K562 (cell line): ENCODE measurements at regions of chr5 and their contacts with region 1.

Region 1: DNA sequence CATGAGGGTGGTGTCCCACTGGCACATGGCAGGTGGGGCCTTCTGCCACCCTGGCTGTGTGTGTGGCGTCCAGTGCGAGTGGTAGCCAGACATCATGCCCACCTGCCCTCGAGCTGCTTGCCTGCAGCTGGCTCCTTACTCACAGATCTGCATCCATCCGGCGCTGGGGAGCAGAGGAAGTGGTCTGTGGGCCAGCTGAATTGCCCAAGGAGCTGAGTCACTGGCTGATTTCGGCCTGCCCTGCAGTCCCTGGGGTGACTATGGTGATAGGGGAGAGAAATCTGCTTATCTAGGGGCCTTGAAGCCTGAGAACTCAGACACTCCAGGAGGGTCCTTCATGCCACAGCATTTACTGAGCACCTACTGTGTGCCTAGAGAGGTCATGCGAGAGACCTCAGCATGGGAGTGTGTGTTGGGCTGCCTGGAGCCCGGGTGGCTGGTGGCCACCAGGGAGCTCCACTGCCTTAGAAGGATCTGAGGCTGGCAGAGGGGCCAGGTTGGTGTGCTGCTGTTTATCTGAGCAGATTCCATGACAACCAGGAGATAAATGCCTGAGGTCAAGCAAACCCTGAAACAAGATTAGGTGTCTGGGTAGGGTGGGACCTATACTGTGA is 57.1 kb downstream of the SLC22A5 start:
- DNase-seq: peak; percentile 75 to 91 (median 84)
- ATAC-seq: peak; percentile 81
- H3K4me3 ChIP-seq: no peak overlapping the region
- H3K27ac ChIP-seq: peak overlapping the region; percentile 76
- H3K4me1 ChIP-seq: peaks cover 52 to 71% of the 10 kb centered on the region in 2 experiments
- H3K27me3 ChIP-seq: no peaks in the 10 kb centered on the region
- CTCF ChIP-seq: peak; percentile 57 to 66 (median 59)
- EP300 ChIP-seq: peak; percentile 83; the same call in 1 of the 2 replicates
- POLR2A ChIP-seq: peak; percentile 71
- RAD21 ChIP-seq: peak; percentile 60 to 66

Region 2: DNA sequence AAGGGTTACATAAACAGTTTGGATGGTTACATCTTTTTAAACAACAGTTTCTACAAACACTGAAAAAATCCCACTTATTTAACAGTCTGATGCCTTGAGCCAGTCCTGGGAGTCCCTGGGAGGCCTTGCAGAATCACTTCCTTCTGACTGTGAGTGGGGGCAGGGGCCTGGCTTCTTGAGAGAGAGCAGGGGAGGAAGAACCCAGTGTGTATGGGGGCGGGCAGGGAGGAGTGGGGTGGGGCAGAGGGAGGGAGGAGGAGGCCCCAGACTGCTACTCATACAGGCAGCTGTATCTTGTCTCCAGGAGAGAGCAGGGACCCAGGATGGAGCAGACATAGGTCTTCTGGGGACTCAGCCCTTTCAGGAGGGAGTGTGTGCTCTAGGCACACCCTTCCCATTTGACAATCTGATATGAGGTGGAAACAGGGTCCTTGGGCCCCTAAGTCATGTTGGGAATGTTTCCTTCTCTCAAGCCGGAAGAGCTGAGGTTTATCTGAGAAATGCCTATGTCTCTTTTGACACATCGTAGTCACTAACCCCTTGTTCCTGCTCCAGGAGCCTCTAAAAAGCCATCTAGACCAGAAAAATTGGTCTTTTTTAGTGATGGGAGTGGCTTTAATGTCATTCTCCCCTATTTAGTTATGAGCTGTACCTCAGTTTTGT is 11.1 kb after region 1 on chr5:
- CTCF ChIA-PET with region 1: no interaction called
- POLR2A ChIA-PET with region 1: interaction called, 26 read pairs
- in situ Hi-C with region 1: no loop called
- intact Hi-C with region 1: no loop called
- DNase-seq: peak; percentile 82 to 91 (median 88)
- ATAC-seq: peak; percentile 95
- H3K4me3 ChIP-seq: no peak overlapping the region
- H3K27ac ChIP-seq: peak overlapping the region; percentile 5; the same call in 1 of the 3 replicates
- H3K4me1 ChIP-seq: peaks cover 15 to 29% of the 10 kb centered on the region in 2 experiments; a peak in 4 of 5 replicates
- H3K27me3 ChIP-seq: no peaks in the 10 kb centered on the region
- CTCF ChIP-seq: no peak
- EP300 ChIP-seq: peak; percentile 25; the same call in 1 of the 2 replicates
- POLR2A ChIP-seq: no peak
- RAD21 ChIP-seq: no peak

Region 3: DNA sequence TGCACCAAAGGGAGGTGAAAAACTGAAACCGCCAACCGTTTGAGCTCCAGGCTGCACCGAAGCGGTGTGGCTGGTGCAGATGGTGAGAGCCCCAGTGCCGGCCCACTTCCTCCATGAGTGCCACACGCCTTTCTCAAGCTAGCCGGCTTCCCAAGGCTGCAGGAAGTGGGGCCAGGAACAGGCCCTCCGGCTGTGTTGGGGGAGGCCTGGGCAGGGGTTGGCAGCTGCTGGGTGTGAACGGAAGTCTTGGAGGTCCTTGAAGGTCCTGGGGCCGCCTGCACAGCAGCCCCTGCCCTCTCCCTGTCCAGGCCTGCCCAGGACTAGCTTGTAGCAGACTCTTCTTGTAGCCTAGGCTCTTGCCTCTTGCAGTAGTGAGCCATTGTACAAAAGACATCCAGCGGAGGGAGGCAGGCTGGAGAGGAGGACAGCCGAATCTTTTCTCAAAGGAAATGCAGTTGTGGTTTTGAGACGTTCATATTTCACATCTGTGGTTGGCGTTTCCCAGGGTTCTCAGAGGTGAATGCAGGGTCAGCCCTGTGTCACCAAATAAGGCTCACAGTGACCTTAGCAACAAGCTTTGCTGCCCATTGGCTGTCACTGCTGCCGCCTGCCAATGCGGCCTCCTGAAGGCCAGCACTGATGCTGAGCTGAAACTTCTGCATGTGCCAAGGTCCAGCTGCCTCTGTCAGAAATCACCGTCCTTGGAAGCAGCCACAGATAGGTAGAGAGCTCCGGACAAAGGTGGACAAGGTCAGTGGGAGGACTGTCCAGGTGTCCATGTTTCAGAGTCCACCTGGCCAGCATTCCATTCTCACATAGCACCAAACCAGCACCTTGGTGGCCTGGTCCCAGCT is 40.0 kb after region 1 on chr5:
- CTCF ChIA-PET with region 1: no interaction called
- POLR2A ChIA-PET with region 1: interaction called, 4 read pairs
- in situ Hi-C with region 1: no loop called
- intact Hi-C with region 1: loop called (anchors 2 kb)
- DNase-seq: peak in 2 of 4 experiments; percentile 50 to 76
- ATAC-seq: peak; percentile 68
- H3K4me3 ChIP-seq: no peak overlapping the region
- H3K27ac ChIP-seq: peak overlapping the region; percentile 54; the same call in 1 of the 3 replicates
- H3K4me1 ChIP-seq: peaks cover 24 to 28% of the 10 kb centered on the region in 2 experiments
- H3K27me3 ChIP-seq: no peaks in the 10 kb centered on the region
- CTCF ChIP-seq: no peak
- EP300 ChIP-seq: 0 out of 2 replicates have a peak, but pooled peaks have one; percentile 22
- POLR2A ChIP-seq: no peak
- RAD21 ChIP-seq: peak in 1 of 2 experiments; percentile 34; a peak in 2 of 4 replicates

Region 4: DNA sequence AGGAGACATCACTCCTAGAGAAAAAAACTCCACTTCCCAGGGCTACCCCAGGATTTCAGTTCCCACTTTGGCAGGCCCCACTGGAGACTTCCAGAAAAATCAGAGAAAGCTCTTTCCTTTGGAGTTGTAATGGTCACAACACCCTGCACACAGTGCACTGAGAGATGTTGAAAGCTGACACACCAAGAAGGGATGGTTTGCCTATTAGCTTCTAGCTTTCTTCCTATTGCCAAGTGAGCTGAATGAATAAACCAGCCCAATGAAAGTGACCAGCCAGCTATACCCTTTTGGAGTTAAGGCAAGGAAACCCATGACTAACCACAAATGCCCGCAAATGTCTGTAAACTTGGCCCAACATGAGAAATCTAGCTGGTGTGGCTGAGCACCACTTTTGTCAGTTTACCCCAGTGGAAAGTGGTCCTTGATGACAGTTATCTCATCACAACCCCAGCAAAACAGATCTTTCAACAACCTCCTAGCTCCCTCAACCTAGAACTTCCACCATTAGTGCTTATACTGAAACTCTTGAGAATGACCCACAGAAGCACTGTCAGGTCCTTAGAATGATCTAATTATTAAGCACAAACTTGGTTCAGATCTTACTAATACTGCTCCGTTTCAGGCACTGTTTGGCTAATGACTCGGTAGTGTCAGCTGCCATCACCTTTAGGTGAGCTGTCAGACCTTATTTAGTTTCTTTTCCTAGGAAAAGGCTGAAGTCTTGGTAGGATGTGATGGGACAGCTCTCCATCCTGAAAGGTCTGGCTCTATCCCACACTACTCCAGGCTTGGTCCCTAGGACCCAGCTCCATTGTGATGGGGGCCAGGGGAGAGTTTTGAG is 52.7 kb after region 1 on chr5:
- CTCF ChIA-PET with region 1: no interaction called
- POLR2A ChIA-PET with region 1: interaction called, 20 read pairs
- in situ Hi-C with region 1: no loop called
- intact Hi-C with region 1: no loop called
- DNase-seq: no peak
- ATAC-seq: no peak
- H3K4me3 ChIP-seq: no peak overlapping the region
- H3K27ac ChIP-seq: no peak overlapping the region
- H3K4me1 ChIP-seq: peaks cover 0 to 13% of the 10 kb centered on the region in 2 experiments; a peak in 3 of 5 replicates
- H3K27me3 ChIP-seq: no peaks in the 10 kb centered on the region
- CTCF ChIP-seq: no peak
- EP300 ChIP-seq: no peak
- POLR2A ChIP-seq: no peak
- RAD21 ChIP-seq: no peak